Ascending aorta (tissue), 2 donors: ENCODE measurements at regions of chr13 and their contacts with region 1.

Region 1: DNA sequence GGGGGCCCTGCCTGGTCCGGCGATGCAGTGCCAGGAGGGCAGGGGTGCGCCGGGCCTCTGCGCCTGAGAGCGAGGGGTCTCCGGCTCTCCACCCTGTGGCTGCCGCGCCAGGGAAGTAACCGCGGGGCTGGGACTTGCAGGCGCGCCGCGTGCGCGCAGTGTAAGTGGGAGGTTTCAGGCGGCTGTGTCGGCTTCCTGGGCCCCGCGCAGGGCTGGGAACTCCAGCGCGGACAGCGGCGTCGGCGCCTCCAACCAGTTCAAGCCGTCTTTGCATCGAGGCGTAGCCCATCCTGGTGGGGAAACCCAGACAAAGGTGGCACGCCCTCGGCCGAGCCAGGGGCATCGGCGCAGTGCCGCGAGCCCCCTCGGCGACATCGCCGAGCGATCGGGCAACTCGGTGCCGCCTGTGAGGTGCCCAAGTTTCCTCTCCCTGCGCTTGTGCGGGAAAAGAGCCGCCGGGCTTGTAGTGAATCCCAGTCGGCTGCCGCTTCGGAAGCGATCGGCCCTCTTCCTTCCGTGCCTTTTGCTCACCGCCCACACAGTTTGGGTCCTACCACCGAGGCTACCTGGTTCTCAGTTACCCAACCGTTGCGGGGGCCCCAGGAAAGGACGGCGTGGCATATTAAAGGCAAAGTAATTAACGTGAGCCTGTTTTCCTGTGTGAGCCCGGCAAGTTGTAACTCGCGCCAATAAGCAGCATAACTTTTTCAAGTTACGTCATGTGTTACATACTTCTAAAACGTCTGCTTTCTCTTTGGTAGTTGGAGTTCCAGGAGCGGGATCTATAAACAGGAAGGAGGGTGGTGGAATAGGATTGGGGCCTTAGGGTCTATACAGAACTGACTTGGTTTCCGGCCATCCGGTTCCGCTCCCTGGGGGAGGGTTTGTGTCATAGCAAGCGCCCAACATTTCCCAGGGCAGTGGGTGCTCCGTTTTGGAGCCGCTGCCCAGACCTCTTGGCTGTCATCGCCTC is 1.2 kb downstream of the LRCH1 start:
- DNase-seq: peak; percentile 28 to 86
- H3K4me3 ChIP-seq: peak overlapping the region; percentile 90 to 100
- H3K27ac ChIP-seq: peak overlapping the region; percentile 95 to 96
- H3K4me1 ChIP-seq: peaks cover 2 to 14% of the 10 kb centered on the region in 2 donors
- H3K27me3 ChIP-seq: no peaks in the 10 kb centered on the region
- CTCF ChIP-seq: peak in 2 of 3 experiments; percentile 30 to 38

Region 2: DNA sequence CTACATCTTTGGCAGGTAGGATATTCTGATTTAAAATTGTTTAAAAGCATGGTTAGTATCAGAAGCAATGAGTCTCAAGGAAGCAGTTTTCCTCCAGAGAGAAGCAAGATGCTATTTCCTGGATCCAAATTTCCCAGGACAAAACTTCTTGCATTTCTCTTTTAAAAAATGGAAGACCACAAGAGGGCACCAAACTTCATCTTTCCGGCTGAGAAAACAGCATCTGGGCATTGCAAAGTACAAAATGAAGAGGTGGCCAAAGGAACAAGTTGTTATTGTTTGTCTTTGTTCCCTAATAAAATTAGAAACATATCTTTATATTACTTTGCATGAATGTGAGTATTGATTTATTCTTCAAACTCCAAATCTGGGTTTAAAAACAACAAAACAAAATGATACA is 61.2 kb before region 1 on chr13:
- intact Hi-C with region 1: loop called (anchors 2 kb)
- DNase-seq: no peak
- H3K4me3 ChIP-seq: no peak overlapping the region
- H3K27ac ChIP-seq: peak overlapping the region in 1 of 2 donors; percentile 32
- H3K4me1 ChIP-seq: peaks cover 5 to 23% of the 10 kb centered on the region in 2 donors
- H3K27me3 ChIP-seq: no peaks in the 10 kb centered on the region
- CTCF ChIP-seq: peak; percentile 42 to 72 (median 60)

Region 3: GRCh38 chr13:46571189-46571908 is 17.2 kb after region 1 on chr13:
- intact Hi-C with region 1: loop called (anchors 1 kb)
- DNase-seq: peak in 1 of 2 donors; percentile 71
- H3K4me3 ChIP-seq: peak overlapping the region in 1 of 2 donors; percentile 11
- H3K27ac ChIP-seq: peak overlapping the region; percentile 76 to 84
- H3K4me1 ChIP-seq: peaks cover 8 to 39% of the 10 kb centered on the region in 2 donors
- H3K27me3 ChIP-seq: no peaks in the 10 kb centered on the region
- CTCF ChIP-seq: no peak

Region 4: GRCh38 chr13:46603165-46603603 is 49.0 kb after region 1 on chr13:
- intact Hi-C with region 1: loop called (anchors 10 kb)
- DNase-seq: no peak
- H3K4me3 ChIP-seq: no peak overlapping the region
- H3K27ac ChIP-seq: no peak overlapping the region
- H3K4me1 ChIP-seq: peaks cover 2 to 69% of the 10 kb centered on the region in 2 donors
- H3K27me3 ChIP-seq: no peaks in the 10 kb centered on the region
- CTCF ChIP-seq: no peak

Region 5: DNA sequence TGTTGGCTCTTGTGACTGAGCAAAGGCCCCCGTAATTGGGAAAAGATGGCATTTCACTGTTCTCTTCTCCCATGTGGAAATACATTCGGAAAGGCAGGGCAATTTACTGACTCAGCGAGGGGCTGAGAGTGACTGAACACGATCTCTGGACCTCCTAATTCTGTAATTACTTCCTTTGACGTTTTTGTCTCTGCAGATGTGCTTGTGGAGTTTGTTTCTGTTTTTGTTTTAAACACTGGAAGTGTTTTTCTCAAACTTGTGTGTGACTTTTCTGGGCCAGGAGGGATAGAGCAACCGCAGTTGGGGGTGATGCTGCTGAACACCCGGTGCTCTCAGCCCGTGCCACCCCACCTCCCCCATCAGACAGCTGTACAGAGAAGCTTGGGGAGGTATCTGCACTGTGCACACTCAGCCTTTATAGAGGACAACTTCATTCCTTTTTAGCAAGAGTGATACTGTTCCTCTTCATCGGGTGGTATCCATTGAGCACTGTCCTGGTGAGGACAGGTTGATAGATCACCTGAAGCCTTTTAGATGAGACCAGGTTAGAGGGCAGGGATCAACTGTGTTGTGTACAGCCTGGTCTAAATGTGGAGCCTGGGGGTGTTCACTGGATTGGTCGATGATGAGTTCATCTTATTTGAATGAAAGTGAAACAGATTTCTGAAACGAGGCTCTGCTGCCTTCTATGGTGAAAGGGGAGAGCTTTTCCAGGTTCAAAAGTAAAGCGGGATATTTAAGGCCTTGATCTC is 125.4 kb after region 1 on chr13:
- intact Hi-C with region 1: loop called (anchors 2 kb)
- DNase-seq: no peak
- H3K4me3 ChIP-seq: peak overlapping the region; percentile 28 to 63
- H3K27ac ChIP-seq: peak overlapping the region; percentile 77 to 87
- H3K4me1 ChIP-seq: peaks cover 12 to 33% of the 10 kb centered on the region in 2 donors
- H3K27me3 ChIP-seq: no peaks in the 10 kb centered on the region
- CTCF ChIP-seq: peak in 2 of 3 experiments; percentile 19 to 28

Region 6: DNA sequence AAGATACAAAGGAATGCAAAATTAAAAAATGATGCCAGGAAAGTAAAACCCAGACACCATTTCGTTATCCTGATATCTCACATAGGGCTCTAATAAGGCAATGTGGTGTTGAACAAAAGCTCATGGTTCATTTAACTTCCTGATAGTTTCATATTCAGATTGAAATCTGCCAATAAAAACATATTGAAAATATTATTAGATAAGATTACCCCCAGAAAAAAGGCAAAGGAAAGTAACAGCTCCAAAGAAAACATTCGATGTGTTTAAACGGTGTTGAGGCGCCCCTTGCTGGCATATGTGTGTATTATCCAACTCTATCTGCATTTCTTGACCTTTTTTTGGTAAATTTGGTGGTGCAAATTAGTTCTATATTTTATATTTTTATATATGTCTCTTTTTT is 166.9 kb after region 1 on chr13:
- intact Hi-C with region 1: loop called (anchors 1 kb)
- DNase-seq: peak in 1 of 2 donors; percentile 68
- H3K4me3 ChIP-seq: no peak overlapping the region
- H3K27ac ChIP-seq: peak overlapping the region in 1 of 2 donors; percentile 41
- H3K4me1 ChIP-seq: peaks cover 4 to 8% of the 10 kb centered on the region in 2 donors
- H3K27me3 ChIP-seq: no peaks in the 10 kb centered on the region
- CTCF ChIP-seq: peak; percentile 62 to 83 (median 69)